H1 (cell line): ENCODE measurements at regions of chr20 and their contacts with region 1.

Region 1: GRCh38 chr20:49046087-49046900 is at the start of gene CSE1L:
- DNase-seq: peak; percentile 87 to 98
- H3K4me3 ChIP-seq: peak within 1 kb of the TSS; percentile 95 to 99 (median 98)
- H3K27ac ChIP-seq: peak within 1 kb of the TSS; percentile 99
- H3K4me1 ChIP-seq: peaks cover 0 to 6% (median 2%) of the 10 kb centered on the region in 4 experiments; a peak in 4 of 7 replicates
- H3K27me3 ChIP-seq: no peaks in the 10 kb centered on the region
- CTCF ChIP-seq: no peak
- EP300 ChIP-seq: no peak
- POLR2A ChIP-seq: peak; percentile 96 to 98
- RAD21 ChIP-seq: no peak
- total RNA-seq, gene CSE1L: 252 and 269 TPM in 2 replicates

Region 2: GRCh38 chr20:48767615-48767960 is 278.7 kb before region 1 on chr20:
- CTCF ChIA-PET with region 1: no interaction called
- POLR2A ChIA-PET with region 1: no interaction called
- DNase-seq: no peak
- H3K4me3 ChIP-seq: no peak overlapping the region
- H3K27ac ChIP-seq: no peak overlapping the region
- H3K4me1 ChIP-seq: peaks cover 2 to 16% (median 7%) of the 10 kb centered on the region in 4 experiments
- H3K27me3 ChIP-seq: no peaks in the 10 kb centered on the region
- CTCF ChIP-seq: no peak
- EP300 ChIP-seq: no peak
- POLR2A ChIP-seq: no peak
- RAD21 ChIP-seq: no peak

Region 3: DNA sequence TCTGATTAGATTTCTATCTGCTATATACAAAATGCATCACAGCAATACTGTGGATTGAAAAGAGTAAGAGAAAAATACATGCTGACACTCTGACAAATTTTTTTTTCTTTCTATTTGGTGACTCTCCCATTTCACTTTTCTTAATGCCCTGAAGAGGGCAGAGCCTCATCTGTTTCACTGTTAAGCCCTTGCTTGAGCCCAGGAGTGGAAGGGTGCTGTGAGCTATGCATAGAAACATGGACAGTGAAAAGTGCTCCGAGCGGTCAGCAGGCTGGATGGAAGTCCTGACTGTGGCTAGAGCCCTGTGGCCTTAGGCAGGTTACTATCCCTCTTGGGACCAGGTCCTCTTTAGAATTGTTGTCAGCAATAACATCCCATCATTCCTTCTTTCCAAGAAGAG is 17.6 kb before region 1 on chr20:
- CTCF ChIA-PET with region 1: interaction called, 8 read pairs
- POLR2A ChIA-PET with region 1: interaction called, 19 read pairs
- DNase-seq: no peak
- H3K4me3 ChIP-seq: no peak overlapping the region
- H3K27ac ChIP-seq: no peak overlapping the region
- H3K4me1 ChIP-seq: no peaks in the 10 kb centered on the region
- H3K27me3 ChIP-seq: no peaks in the 10 kb centered on the region
- CTCF ChIP-seq: peak in 2 of 3 experiments; percentile 19 to 45; a peak in 2 of 4 replicates
- EP300 ChIP-seq: no peak
- POLR2A ChIP-seq: no peak
- RAD21 ChIP-seq: peak; percentile 41 to 51; a peak in 3 of 4 replicates